OCI-LY7 (cell line): ENCODE measurements at regions of chr16 and their contacts with region 1.

Region 1: GRCh38 chr16:67246934-67247697 is at the start of gene FHOD1:
- DNase-seq: peak; percentile 98
- H3K4me3 ChIP-seq: peak within 1 kb of the TSS; percentile 86
- H3K27ac ChIP-seq: peak within 1 kb of the TSS; percentile 70
- H3K4me1 ChIP-seq: peaks cover 50% of the 10 kb centered on the region
- CTCF ChIP-seq: 0 out of 2 replicates have a peak, but pooled peaks have one; percentile 8
- total RNA-seq, gene FHOD1: 16.0 and 16.5 TPM in 2 replicates

Region 2: DNA sequence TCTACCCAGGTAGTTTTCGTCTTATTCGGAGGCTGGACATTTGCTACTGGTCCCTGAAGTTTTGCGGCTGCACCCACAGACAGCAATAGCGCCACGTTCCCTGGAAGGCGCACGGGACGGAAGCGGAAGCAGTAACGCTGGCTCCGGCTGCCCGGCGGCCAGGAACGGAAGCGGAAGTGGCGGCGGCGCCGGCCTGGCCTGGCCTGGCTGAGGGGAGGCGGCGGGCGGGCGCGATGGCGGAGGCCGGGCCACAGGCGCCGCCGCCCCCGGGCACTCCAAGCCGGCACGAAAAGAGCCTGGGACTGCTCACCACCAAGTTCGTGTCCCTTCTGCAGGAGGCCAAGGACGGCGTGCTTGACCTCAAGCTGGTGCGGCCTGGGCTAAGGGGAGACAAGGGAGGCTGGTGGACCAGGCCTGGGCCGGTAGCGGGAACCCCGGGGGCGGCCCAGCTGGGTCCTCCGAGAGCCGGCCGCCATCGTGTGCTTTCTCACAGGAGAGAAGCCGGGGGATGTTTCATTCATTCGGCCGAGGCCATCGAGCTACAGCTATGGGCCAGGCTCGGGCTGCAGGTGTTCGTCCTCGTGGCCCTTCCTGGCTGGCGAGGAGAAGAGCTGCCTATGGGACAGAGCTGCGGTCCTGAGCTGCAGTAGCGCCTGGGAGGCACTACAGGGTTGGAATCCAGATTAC is 55.0 kb before region 1 on chr16 and contains the start of gene E2F4:
- CTCF ChIA-PET with region 1: interaction called, 4 read pairs
- POLR2A ChIA-PET with region 1: interaction called, 3 read pairs
- intact Hi-C with region 1: loop called (anchors 2 kb)
- DNase-seq: peak; percentile 96
- H3K4me3 ChIP-seq: peak within 1 kb of the TSS; percentile 98
- H3K27ac ChIP-seq: peak within 1 kb of the TSS; percentile 45
- H3K4me1 ChIP-seq: peaks cover 19% of the 10 kb centered on the region
- CTCF ChIP-seq: no peak
- total RNA-seq, gene E2F4: 139 and 157 TPM in 2 replicates